Dendritic cell treated with granulocyte-macrophage colony-stimulating factor and Interleukin-4, amounts not matched to agents 40 ng/mL and 50 ng/mL, for 4 days (primary cell): ENCODE measurements at regions of chr1 and their contacts with region 1.

Region 1: DNA sequence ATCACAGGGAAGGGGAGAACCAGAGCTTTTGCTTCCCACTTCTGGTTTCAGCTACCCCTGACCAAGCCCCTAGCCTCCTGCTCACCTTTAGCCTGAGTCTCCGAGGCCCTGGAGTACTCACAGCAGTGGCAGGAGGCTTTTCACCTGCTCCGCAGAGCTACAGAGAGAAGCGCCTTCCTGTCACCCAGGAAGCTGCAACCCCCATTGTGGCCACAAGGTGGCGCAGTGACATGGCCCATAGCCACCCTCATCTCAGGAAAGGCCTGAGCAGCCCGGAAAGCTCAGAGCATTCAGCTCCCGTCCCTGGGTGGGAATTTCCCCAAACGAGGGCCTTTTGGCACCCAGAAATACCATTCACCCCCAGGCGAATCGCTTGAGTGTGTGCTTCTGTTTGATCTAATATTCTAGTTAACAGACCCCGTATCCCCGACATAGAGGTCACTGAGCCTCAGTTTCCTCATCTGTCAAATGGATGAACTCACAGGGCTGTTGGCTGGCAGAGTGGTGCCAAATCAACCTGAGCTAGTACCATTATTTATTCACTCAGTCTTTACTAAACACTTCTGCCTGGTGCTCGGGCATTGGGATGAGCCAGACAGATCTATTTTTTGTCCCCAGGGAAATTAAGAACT is 25.3 kb downstream of the A3GALT2 start:
- H3K4me3 Mint-ChIP-seq: no peak overlapping the region
- H3K27ac Mint-ChIP-seq: no peak overlapping the region
- H3K4me1 Mint-ChIP-seq: peaks cover 16% of the 10 kb centered on the region
- H3K27me3 Mint-ChIP-seq: no peaks in the 10 kb centered on the region

Region 2: DNA sequence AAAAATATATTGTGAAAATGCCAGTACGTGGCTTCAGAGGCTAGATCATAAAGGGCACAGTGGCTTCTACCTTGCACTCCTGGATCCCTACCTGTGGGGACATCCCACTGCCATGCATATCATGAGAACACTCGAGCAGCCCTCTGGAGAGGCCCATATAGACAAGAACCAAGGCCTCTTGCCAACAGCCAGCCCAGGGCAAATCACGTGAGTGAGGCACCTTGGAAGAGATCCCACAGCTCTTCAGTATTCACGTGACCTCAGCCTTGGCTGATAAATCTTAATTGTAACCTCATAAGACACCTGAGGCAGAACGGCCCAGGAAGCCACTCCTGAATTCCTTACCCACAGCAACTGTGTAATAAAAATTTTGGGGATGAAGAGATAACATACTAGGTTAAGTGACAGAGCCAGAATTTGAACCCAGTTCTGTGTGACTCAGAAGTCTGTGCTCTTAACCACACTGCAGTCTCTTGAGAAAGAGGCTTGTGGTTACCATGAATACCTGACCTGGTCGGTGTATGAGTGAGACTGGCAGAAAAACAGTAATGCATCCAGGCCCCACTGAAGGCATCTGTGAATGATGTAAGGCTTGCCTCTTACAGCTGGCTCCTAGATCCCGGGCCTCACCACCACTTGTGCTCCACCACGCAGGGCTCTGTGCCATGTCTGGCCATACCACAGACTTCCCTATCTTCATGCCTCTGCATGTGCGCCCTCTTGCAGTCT is 32.2 kb after region 1 on chr1:
- intact Hi-C with region 1: no loop called
- H3K4me3 Mint-ChIP-seq: no peak overlapping the region
- H3K27ac Mint-ChIP-seq: no peak overlapping the region
- H3K4me1 Mint-ChIP-seq: peaks cover 60% of the 10 kb centered on the region
- H3K27me3 Mint-ChIP-seq: no peaks in the 10 kb centered on the region

Region 3: DNA sequence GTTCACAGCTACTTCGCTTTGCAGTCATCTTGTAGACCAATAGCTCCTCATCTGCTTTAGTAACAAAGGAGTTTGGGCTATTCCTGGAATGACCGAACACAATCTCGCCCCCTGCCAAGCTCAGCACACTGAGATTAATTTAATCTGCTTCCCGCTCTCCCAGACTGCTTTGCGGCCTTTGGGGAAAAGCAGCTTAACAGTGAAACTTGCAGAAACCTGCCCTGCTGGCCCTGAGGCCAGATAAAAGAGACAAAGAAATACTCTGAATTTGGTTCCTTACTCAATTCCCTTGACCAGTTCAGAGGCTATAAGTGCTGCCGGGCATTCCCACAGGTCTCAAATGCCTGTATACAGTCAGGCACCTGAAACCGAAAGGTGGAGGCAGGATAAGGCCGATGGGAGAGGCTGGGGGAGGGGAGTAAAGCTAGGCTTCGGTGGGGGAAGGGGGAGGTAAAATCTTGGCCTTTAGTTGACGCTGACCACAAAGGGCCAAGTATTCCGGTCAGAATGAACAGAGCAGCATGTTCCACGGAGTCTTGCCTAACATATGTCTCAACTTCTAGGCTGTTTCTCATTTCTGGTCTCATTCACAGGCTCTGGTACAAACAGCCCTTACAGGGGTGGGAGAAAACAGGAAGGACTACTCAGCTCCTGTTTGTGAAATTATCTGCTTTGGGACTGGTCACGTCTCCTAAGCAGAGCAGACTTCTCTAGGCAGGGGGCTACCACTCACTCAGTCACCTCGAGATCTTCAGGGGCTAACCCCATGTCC is 43.1 kb after region 1 on chr1:
- intact Hi-C with region 1: loop called (anchors 5 kb)
- H3K4me3 Mint-ChIP-seq: peak overlapping the region; percentile 2
- H3K27ac Mint-ChIP-seq: peak overlapping the region; percentile 68
- H3K4me1 Mint-ChIP-seq: peaks cover 87% of the 10 kb centered on the region
- H3K27me3 Mint-ChIP-seq: no peaks in the 10 kb centered on the region

Region 4: DNA sequence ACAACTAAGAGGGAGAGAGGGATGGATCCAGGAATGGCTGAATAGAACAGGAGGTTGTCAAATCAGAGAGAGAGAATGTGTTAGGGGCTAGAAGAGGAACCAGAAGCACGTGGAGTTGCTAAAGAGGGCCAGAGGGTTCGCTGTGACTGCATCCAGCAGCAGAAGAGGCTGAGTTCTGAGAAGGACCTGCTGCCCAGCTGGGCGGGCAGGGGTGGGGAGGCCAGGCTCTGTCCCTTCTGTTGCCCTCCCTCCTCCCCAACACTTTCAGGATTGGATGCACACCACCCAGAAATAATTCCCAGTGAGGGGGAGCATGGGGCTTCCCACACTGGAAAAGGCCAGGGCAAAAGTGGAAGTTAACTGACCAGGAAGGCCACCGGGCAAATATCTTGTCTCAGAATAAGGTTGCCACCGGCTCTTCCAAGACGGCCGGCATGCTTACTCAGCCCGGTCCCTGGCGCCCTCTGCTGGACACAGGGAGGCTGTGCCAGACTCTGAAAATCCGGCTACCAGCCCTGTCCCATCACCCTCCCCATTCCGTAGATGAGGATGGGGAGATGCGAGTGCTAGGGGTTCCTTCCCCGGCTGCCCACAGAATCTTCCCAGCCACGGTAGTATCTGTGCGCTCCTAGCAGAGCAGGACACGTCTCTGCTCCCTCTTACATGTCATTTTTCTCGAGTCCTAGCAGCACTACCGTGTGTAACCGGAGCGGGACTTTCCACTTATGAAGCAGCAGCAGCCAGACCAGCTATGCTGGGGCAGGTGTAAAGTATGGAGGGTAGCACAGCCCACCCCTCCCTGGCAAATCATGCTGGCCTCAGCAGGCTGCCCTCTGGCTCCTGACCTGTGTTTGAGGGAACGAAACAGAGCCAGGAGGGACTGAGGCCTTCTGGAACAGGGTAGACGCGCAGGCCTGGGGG is 72.2 kb after region 1 on chr1:
- intact Hi-C with region 1: loop called (anchors 1 kb)
- H3K4me3 Mint-ChIP-seq: no peak overlapping the region
- H3K27ac Mint-ChIP-seq: peak overlapping the region; percentile 2
- H3K4me1 Mint-ChIP-seq: peaks cover 17% of the 10 kb centered on the region
- H3K27me3 Mint-ChIP-seq: peaks cover 4% of the 10 kb centered on the region

Region 5: DNA sequence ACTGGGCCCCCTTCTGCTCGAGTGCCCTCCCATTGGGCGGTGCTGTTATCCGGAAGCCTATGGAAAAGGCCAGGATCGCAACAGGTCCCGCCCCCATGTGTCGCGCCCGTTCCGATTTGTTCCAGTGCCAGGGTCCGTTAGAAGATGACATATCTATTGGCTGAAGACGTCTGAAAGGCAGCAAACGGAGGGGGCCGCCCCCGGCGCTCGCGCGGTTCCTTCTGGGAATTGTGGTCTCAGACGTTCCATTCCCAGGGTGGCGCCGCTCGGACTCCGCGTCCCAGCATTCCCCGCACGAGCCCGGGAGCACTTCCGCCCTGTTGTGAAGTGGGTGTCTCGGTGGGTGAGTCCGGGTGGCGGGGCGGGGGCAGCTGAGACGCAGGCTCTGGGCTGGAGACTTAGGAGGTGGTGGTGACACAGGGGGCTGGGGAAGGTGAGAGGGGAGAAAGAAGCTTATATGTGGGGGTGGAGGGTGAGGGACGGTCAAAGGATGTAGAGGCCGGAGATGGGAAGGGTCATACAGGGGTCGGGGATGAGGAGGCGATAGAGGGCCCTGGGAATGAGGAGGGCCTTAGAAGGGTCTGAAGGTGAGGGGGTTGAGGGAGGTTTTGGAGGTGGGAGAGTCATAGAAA is 176.9 kb after region 1 on chr1 and contains the start of gene ZSCAN20:
- intact Hi-C with region 1: loop called (anchors 2 kb)
- H3K4me3 Mint-ChIP-seq: peak within 1 kb of the TSS; percentile 82
- H3K27ac Mint-ChIP-seq: peak within 1 kb of the TSS; percentile 81
- H3K4me1 Mint-ChIP-seq: peaks cover 42% of the 10 kb centered on the region
- H3K27me3 Mint-ChIP-seq: peaks cover 8% of the 10 kb centered on the region

Region 6: DNA sequence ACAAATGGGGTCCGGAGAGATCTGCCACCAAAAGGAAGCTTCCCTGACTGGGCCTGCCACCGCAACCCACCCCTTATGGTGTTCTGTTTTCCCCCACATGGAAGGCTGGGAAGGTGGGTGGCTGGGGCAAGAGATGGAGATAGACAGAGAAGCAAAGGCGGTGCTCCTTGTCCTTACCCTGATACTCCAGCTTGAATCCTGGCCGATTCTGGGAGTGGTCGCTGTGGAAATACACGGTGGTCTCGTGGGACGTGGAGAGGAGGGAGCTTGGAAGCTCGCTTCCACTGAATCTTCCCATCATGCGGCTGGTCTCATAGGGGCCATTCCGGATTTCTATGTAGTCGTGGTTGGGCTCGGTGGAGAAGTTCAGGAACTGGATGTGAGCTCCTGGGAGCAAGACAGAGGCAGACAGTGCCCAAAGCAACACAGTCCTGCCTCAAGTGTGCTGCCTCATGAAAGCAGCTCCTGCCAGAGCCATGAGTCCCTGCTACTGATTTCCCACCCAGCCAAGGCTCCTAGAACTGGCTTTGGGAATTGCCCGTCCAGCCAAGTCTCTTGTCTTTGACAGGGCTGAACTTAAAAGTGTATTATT is 315.4 kb after region 1 on chr1:
- intact Hi-C with region 1: loop called (anchors 5 kb)
- H3K4me3 Mint-ChIP-seq: no peak overlapping the region
- H3K27ac Mint-ChIP-seq: no peak overlapping the region
- H3K4me1 Mint-ChIP-seq: no peaks in the 10 kb centered on the region
- H3K27me3 Mint-ChIP-seq: peaks cover 11% of the 10 kb centered on the region